Activated CD4-positive, alpha-beta T cell treated with anti-CD3 and anti-CD28 coated beads for 36 hours (primary cell): ENCODE measurements at regions of chr21 and their contacts with region 1.

Region 1: GRCh38 chr21:46635324-46636172 is at the start of gene PRMT2:
- DNase-seq: peak; percentile 99
- ATAC-seq: peak; percentile 82
- H3K4me3 Mint-ChIP-seq: peak within 1 kb of the TSS; percentile 95
- H3K27ac Mint-ChIP-seq: peak within 1 kb of the TSS; percentile 90
- H3K4me1 Mint-ChIP-seq: peaks cover 68% of the 10 kb centered on the region
- H3K27me3 Mint-ChIP-seq: no peaks in the 10 kb centered on the region
- total RNA-seq, gene PRMT2: 60.9 to 74.1 TPM

Region 2: GRCh38 chr21:46285761-46286496 is 349.6 kb before region 1 on chr21 and contains the start of gene YBEY:
- CTCF ChIA-PET with region 1: no interaction called
- POLR2A ChIA-PET with region 1: no interaction called
- intact Hi-C with region 1: loop called in 1 of 2 experiments (anchors 1 kb)
- DNase-seq: peak; percentile 94
- ATAC-seq: peak; percentile 94
- H3K4me3 Mint-ChIP-seq: peak within 1 kb of the TSS; percentile 88
- H3K27ac Mint-ChIP-seq: peak within 1 kb of the TSS; percentile 98
- H3K4me1 Mint-ChIP-seq: peaks cover 52% of the 10 kb centered on the region
- H3K27me3 Mint-ChIP-seq: no peaks in the 10 kb centered on the region
- total RNA-seq, gene YBEY: 16.9 to 20.6 TPM

Region 3: GRCh38 chr21:46559291-46559983 is 76.1 kb before region 1 on chr21:
- CTCF ChIA-PET with region 1: interaction called, 4 read pairs
- POLR2A ChIA-PET with region 1: interaction called, 7 read pairs
- intact Hi-C with region 1: loop called in 1 of 2 experiments (anchors 1 kb)
- DNase-seq: peak; percentile 85
- ATAC-seq: peak; percentile 90
- H3K4me3 Mint-ChIP-seq: peak overlapping the region; percentile 66
- H3K27ac Mint-ChIP-seq: peak overlapping the region; percentile 94
- H3K4me1 Mint-ChIP-seq: peaks cover 60% of the 10 kb centered on the region
- H3K27me3 Mint-ChIP-seq: no peaks in the 10 kb centered on the region

Region 4: DNA sequence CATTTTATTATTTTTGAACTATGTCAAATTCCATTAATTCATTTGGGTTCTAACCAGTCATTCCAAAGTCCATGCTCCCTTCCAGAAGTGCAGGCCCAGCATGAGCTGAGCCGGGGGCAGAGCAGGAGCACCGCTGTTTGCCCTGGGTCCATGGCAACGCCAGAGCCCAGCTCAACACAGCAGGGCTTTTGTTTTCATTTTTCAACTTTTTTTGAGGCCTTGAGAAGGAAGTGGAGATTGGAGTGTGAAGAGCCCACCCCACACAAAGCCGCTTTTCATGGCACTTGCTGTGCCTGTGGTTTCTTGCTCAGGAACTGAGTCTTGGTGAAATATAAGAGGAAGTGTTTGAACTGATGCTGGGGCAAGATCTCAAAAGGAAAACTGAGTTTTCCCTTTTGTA is 13.3 kb before region 1 on chr21:
- CTCF ChIA-PET with region 1: interaction called, 10 read pairs
- POLR2A ChIA-PET with region 1: no interaction called
- intact Hi-C with region 1: loop called in 1 of 2 experiments (anchors 1 kb)
- DNase-seq: peak; percentile 44
- ATAC-seq: peak; percentile 61
- H3K4me3 Mint-ChIP-seq: peak overlapping the region; percentile 32
- H3K27ac Mint-ChIP-seq: peak overlapping the region; percentile 91
- H3K4me1 Mint-ChIP-seq: peaks cover 56% of the 10 kb centered on the region
- H3K27me3 Mint-ChIP-seq: no peaks in the 10 kb centered on the region